Adrenal gland (tissue), 19 donors: ENCODE measurements at regions of chr3 and their contacts with region 1.

Region 1: GRCh38 chr3:52056968-52057805 is 816 bp upstream of the DUSP7 start:
- DNase-seq: peak; percentile 99 to 100 (median 100)
- H3K4me3 ChIP-seq: peak overlapping the region in 3 of 4 donors; percentile 22 to 54 (median 36)
- H3K27ac ChIP-seq: peak overlapping the region; percentile 5 to 91 (median 71)
- H3K4me1 ChIP-seq: peaks cover 11 to 46% of the 10 kb centered on the region in 2 donors
- H3K27me3 ChIP-seq: no peaks in the 10 kb centered on the region
- CTCF ChIP-seq: no peak
- POLR2A ChIP-seq: peak in 1 of 2 donors; percentile 68

Region 2: DNA sequence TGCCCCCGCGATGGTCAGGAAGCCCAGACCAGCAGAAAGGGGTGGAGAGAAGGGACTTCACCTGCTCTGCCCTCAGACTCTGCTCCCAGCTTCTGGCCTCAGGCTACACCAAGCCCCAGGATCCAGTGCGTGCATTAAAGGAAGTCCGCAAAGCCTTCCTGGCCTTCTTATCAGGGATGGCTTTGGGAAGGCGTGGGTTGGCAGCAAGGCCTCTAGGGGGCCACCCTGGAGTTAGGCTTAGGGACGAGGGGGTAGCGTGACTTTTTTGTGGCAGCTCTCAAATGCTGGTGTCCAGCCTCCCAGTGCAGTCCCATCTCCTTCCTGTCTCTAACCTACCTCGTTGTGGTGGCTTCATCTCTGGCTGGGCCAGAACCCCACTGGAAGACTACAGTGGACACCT is 42.6 kb before region 1 on chr3:
- intact Hi-C with region 1: loop called in 1 of 2 experiments (anchors 5 kb)
- DNase-seq: peak in 1 of 7 donors; percentile 26
- H3K4me3 ChIP-seq: no peak overlapping the region
- H3K27ac ChIP-seq: peak overlapping the region in 1 of 5 donors; percentile 22
- H3K4me1 ChIP-seq: peaks cover 0 to 11% of the 10 kb centered on the region in 2 donors
- H3K27me3 ChIP-seq: no peaks in the 10 kb centered on the region
- CTCF ChIP-seq: peak in 2 of 6 experiments; percentile 21 to 24
- POLR2A ChIP-seq: no peak